ENCODE measurements at regions of chr16 and their contacts with region 1.

Region 1: GRCh38 chr16:28553776-28554633 is at the start of gene SGF29:
- DNase-seq: peak; percentile 92 to 96 (median 94)
- ATAC-seq: peak; percentile 93 to 97 (median 96)
- H3K4me3 ChIP-seq: peak within 1 kb of the TSS; percentile 39 to 94 (median 70)
- H3K27ac ChIP-seq: peak within 1 kb of the TSS; percentile 93 to 100 (median 98)
- H3K4me1 ChIP-seq: peaks cover 0 to 37% (median 9%) of the 10 kb centered on the region in 12 donors
- H3K27me3 ChIP-seq: no peaks in the 10 kb centered on the region
- CTCF ChIP-seq: peak in 9 of 12 donors; percentile 19 to 64 (median 48)
- POLR2A ChIP-seq: peak in 1 of 2 donors; percentile 85
- total RNA-seq, gene SGF29: 11.1 to 27.9 (median 15.6) TPM

Region 2: DNA sequence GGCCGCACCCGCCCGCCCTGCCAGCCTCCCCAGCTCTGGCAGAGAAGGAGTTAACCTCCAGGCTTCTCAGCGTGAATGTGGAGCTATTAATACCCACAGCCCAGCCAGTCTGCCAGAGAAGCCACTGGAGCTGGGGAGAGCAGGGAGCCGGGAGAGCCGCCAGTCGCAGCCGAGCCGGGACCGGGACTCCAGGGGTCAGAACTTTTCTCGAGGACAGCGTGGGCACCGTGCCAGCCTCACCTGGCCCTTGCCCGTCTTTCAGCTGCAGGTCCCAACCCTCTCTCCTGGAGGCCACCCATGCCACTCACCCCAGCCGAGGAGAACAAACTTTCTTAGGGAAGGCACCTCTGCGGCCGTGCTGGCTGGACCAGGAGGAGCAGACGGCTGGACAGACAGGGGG is 295.4 kb before region 1 on chr16:
- intact Hi-C with region 1: no loop called
- DNase-seq: peak; percentile 67 to 86 (median 74)
- ATAC-seq: peak; percentile 50 to 78 (median 70)
- H3K4me3 ChIP-seq: peak overlapping the region; percentile 30 to 65 (median 58)
- H3K27ac ChIP-seq: peak overlapping the region; percentile 21 to 90 (median 79)
- H3K4me1 ChIP-seq: peaks cover 0 to 32% (median 0%) of the 10 kb centered on the region in 12 donors
- H3K27me3 ChIP-seq: peaks cover 0 to 24% (median 5%) of the 10 kb centered on the region in 9 donors
- CTCF ChIP-seq: no peak
- POLR2A ChIP-seq: peak; percentile 59 to 62

Region 3: GRCh38 chr16:28473714-28474265 is 80.2 kb before region 1 on chr16:
- intact Hi-C with region 1: loop called in 1 of 10 experiments (anchors 10 kb)
- DNase-seq: no peak
- ATAC-seq: no peak
- H3K4me3 ChIP-seq: no peak overlapping the region
- H3K27ac ChIP-seq: no peak overlapping the region
- H3K4me1 ChIP-seq: no peaks in the 10 kb centered on the region
- H3K27me3 ChIP-seq: no peaks in the 10 kb centered on the region
- CTCF ChIP-seq: no peak
- POLR2A ChIP-seq: no peak

Region 4: GRCh38 chr16:28504707-28505409 is 49.1 kb before region 1 on chr16:
- intact Hi-C with region 1: no loop called
- DNase-seq: no peak
- ATAC-seq: no peak
- H3K4me3 ChIP-seq: peak overlapping the region in 1 of 12 donors; percentile 44
- H3K27ac ChIP-seq: no peak overlapping the region
- H3K4me1 ChIP-seq: peaks cover 0 to 31% (median 0%) of the 10 kb centered on the region in 12 donors
- H3K27me3 ChIP-seq: peaks cover 0 to 4% (median 0%) of the 10 kb centered on the region in 9 donors
- CTCF ChIP-seq: no peak
- POLR2A ChIP-seq: no peak

Region 5: DNA sequence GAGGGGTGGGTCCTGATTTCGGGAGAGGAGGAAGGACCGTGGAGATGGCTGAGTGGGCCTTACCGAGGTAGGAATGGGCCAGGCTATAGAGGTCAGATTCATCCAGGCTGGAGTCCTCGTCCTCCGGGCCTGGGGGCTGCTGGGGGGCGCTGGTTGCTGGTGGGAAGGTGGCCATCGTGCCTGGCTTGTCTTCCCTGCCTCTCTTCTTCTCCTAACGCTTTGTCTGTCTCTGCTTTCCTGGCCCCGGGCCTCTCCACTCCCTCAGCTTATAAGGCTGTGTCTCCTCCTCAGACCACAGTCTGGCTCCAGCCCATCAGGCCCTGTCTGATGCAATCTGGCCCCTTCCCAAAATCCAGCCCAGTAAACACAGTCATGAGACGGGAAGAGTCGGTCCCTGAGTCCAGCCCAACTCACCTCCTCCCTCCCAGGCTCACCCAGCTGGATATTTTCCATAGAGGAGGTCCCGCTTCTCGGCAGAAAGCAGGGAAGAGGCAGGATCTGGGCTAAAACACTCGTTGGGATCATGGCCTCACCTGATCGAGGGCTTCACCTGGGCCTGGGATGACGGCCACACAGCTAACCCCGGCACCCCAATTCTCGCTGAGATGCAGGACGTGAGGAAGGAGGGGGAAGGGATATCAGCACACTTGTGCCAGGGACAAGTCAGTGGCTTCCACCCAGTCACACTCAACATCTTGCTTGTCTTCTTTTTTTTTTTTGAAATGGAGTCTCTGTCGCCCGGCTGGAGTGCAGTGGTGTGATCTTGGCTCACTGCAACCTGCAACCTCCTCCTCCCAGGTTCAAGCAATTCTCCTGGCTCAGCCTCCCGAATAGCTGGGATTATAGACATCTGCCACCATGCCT is 15.0 kb before region 1 on chr16 and contains the start of gene NUPR1:
- intact Hi-C with region 1: loop called in 1 of 10 experiments (anchors 2 kb)
- DNase-seq: peak; percentile 90 to 96 (median 95)
- ATAC-seq: peak; percentile 96 to 99 (median 98)
- H3K4me3 ChIP-seq: peak within 1 kb of the TSS; percentile 11 to 71 (median 58)
- H3K27ac ChIP-seq: peak within 1 kb of the TSS; percentile 82 to 98 (median 93)
- H3K4me1 ChIP-seq: peaks cover 0 to 54% (median 20%) of the 10 kb centered on the region in 12 donors
- H3K27me3 ChIP-seq: no peaks in the 10 kb centered on the region
- CTCF ChIP-seq: no peak
- POLR2A ChIP-seq: peak in 1 of 2 donors; percentile 85
- total RNA-seq, gene NUPR1: 5.7 to 43.8 (median 26.2) TPM

Region 6: DNA sequence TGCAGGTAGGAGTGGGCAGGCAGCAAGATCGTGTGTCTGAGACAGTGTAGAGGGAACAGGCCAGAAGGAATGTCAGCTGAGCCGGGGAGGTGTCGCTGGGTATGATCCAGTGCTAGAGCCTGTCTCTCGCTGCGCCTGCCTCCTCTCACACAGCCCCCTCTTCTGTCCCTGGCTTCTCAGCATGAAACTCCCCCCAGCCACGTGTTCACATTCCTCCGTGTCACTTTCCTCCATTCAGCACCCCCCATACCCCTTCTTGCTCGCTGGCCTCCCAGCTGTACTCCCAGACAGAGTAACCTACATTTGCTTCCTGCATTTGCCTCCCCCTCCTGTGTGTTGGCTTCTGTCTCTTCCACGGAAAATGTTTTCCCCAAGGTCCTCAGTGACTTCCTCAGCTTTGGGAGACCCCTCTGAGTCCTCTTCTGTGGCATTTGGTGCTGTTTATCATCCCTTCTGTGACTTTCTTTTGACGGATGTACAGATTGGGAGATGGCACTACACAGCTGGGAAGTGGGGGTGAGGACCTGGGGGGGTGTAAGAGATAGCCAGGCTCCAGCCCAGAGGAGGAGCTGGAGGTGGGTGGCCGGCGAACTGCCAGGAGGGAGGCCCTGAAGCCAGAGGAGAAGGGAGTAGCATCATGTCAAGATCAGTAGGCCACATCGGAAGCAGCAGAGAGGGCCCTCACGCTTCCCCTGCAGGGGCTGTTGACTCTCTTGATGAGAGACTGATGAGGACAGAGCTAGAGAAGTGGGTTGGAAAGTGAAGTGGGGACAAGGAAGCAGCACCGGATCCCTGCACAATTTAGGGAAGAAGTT is 18.9 kb after region 1 on chr16:
- intact Hi-C with region 1: no loop called
- DNase-seq: peak in 4 of 5 donors; percentile 48 to 72 (median 66)
- ATAC-seq: peak; percentile 89 to 97 (median 92)
- H3K4me3 ChIP-seq: peak overlapping the region in 2 of 12 donors; percentile 5 to 28
- H3K27ac ChIP-seq: peak overlapping the region in 9 of 12 donors; percentile 24 to 79 (median 54)
- H3K4me1 ChIP-seq: peaks cover 0 to 27% (median 19%) of the 10 kb centered on the region in 12 donors
- H3K27me3 ChIP-seq: no peaks in the 10 kb centered on the region
- CTCF ChIP-seq: no peak
- POLR2A ChIP-seq: no peak

Measured in heart left ventricle (tissue), 16 donors.